ENCODE measurements at regions of chr1 and their contacts with region 1.

Region 1: DNA sequence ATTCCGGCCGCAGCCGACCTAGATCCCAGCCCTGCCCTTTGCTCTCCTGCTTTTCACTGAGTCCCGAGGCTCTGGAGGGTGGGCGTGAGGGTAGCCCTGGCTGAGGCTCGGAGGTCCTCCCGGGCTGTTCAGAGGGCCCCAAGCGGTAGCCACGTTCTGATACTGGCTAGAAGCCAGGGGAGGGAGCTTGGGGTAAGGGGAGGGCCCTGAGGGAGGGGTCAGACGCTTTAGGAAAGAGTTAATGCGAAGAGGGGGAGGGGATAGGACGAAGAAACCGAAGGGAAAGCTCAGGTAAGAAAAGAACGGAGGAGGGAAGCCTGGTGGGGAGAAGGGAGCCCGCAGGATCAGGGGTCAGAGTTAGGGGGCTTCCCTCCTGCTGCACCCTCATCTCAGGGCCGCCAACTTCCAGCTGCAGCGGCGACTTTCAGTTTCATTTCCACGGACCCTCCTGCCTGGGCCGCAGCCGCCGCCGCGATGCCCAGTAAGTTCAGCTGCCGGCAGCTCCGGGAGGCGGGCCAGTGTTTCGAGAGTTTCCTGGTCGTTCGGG is at the start of gene MOV10:
- DNase-seq: peak; percentile 48 to 77 (median 64)
- H3K4me3 ChIP-seq: peak within 1 kb of the TSS; percentile 79
- H3K4me3 Mint-ChIP-seq: peak within 1 kb of the TSS; percentile 81 to 99 (median 97)
- H3K27ac ChIP-seq: peak within 1 kb of the TSS; percentile 81
- H3K27ac Mint-ChIP-seq: peak within 1 kb of the TSS; percentile 61 to 98 (median 94)
- H3K4me1 ChIP-seq: peaks cover 24% of the 10 kb centered on the region
- H3K4me1 Mint-ChIP-seq: peaks cover 45 to 58% (median 52%) of the 10 kb centered on the region in 3 donors
- H3K27me3 ChIP-seq: no peaks in the 10 kb centered on the region
- H3K27me3 Mint-ChIP-seq: no peaks in the 10 kb centered on the region
- total RNA-seq, gene MOV10: 29.9 to 31.0 TPM

Region 2: GRCh38 chr1:112501810-112502641 is 172.5 kb before region 1 on chr1:
- CTCF ChIA-PET with region 1: interaction called, 15 read pairs
- POLR2A ChIA-PET with region 1: interaction called, 4 read pairs
- DNase-seq: peak; percentile 29 to 68 (median 36)
- H3K4me3 ChIP-seq: peak overlapping the region; percentile 34
- H3K4me3 Mint-ChIP-seq: peak overlapping the region; percentile 7 to 76 (median 70)
- H3K27ac ChIP-seq: no peak overlapping the region
- H3K27ac Mint-ChIP-seq: no peak overlapping the region
- H3K4me1 ChIP-seq: peaks cover 5% of the 10 kb centered on the region
- H3K4me1 Mint-ChIP-seq: peaks cover 2 to 11% (median 6%) of the 10 kb centered on the region in 3 donors
- H3K27me3 ChIP-seq: peaks cover 42% of the 10 kb centered on the region
- H3K27me3 Mint-ChIP-seq: peaks cover 50 to 74% of the 10 kb centered on the region in 2 donors

Measured in CD8-positive, alpha-beta memory T cell (primary cell).